Activated T-helper 2 cell treated with anti-CD3 and anti-CD28 coated beads, Interferon-gamma antibody, Interleukin-2, Interleukin-4, amounts not matched to agents 10 μg/mL and 5 μg/mL and 100 μg/mL, durations not matched to agents 14 hours and 24 hours and 36 hours (primary cell): ENCODE measurements at regions of chr12 and their contacts with region 1.

Region 1: GRCh38 chr12:6925540-6926279 is 2.0 kb upstream of the ATN1 start:
- DNase-seq: no peak
- H3K4me3 Mint-ChIP-seq: peak overlapping the region; percentile 83
- H3K27ac Mint-ChIP-seq: peak overlapping the region; percentile 31
- H3K4me1 Mint-ChIP-seq: peaks cover 48% of the 10 kb centered on the region
- H3K27me3 Mint-ChIP-seq: no peaks in the 10 kb centered on the region

Region 2: GRCh38 chr12:6383572-6384498 is 541.9 kb before region 1 on chr12 and contains the start of gene LTBR:
- intact Hi-C with region 1: no loop called
- DNase-seq: no peak
- H3K4me3 Mint-ChIP-seq: no peak within 1 kb of the TSS
- H3K27ac Mint-ChIP-seq: no peak within 1 kb of the TSS
- H3K4me1 Mint-ChIP-seq: no peaks in the 10 kb centered on the region
- H3K27me3 Mint-ChIP-seq: peaks cover 39% of the 10 kb centered on the region
- total RNA-seq, gene LTBR: 0.32 and 0.50 TPM in 2 replicates

Region 3: GRCh38 chr12:6723607-6724396 is 201.9 kb before region 1 on chr12 and contains the start of gene COPS7A:
- intact Hi-C with region 1: no loop called
- DNase-seq: peak; percentile 98
- H3K4me3 Mint-ChIP-seq: peak within 1 kb of the TSS; percentile 99
- H3K27ac Mint-ChIP-seq: peak within 1 kb of the TSS; percentile 98
- H3K4me1 Mint-ChIP-seq: peaks cover 17% of the 10 kb centered on the region
- H3K27me3 Mint-ChIP-seq: no peaks in the 10 kb centered on the region
- total RNA-seq, gene COPS7A: 33.0 and 35.6 TPM in 2 replicates

Region 4: DNA sequence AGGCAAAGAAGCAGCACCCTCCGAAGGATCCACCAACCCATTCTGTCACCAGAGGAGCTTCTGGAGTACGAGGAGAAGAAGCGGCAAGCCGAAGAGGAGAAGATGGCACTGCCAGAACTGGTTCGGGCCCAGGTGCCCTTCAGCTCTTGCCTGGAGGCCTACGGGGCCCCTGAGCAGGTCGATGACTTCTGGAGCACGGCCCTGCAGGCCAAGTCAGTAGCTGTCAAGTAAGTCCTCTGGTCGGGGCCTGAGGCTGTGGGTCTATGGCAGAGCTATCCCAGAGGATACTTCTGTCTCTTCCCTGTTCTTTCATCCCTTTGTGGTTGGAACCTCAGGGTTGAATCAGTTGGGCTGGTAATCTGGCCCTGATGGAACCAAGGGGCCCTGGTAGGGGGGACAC is 64.3 kb before region 1 on chr12:
- intact Hi-C with region 1: no loop called
- DNase-seq: no peak
- H3K4me3 Mint-ChIP-seq: no peak overlapping the region
- H3K27ac Mint-ChIP-seq: no peak overlapping the region
- H3K4me1 Mint-ChIP-seq: peaks cover under 1% of the 10 kb centered on the region
- H3K27me3 Mint-ChIP-seq: no peaks in the 10 kb centered on the region

Region 5: GRCh38 chr12:6937481-6938297 is 12.0 kb after region 1 on chr12:
- intact Hi-C with region 1: loop called (anchors 1 kb)
- DNase-seq: peak; percentile 93
- H3K4me3 Mint-ChIP-seq: peak overlapping the region; percentile 80
- H3K27ac Mint-ChIP-seq: peak overlapping the region; percentile 95
- H3K4me1 Mint-ChIP-seq: peaks cover 45% of the 10 kb centered on the region
- H3K27me3 Mint-ChIP-seq: no peaks in the 10 kb centered on the region

Region 6: GRCh38 chr12:7092229-7092985 is 166.7 kb after region 1 on chr12 and contains the start of gene C1R:
- intact Hi-C with region 1: loop called (anchors 2 kb)
- DNase-seq: peak; percentile 45
- H3K4me3 Mint-ChIP-seq: peak within 1 kb of the TSS; percentile 75
- H3K27ac Mint-ChIP-seq: peak within 1 kb of the TSS; percentile 63
- H3K4me1 Mint-ChIP-seq: peaks cover 6% of the 10 kb centered on the region
- H3K27me3 Mint-ChIP-seq: no peaks in the 10 kb centered on the region
- total RNA-seq, gene C1R: 1.5 and 2.5 TPM in 2 replicates

Region 7: DNA sequence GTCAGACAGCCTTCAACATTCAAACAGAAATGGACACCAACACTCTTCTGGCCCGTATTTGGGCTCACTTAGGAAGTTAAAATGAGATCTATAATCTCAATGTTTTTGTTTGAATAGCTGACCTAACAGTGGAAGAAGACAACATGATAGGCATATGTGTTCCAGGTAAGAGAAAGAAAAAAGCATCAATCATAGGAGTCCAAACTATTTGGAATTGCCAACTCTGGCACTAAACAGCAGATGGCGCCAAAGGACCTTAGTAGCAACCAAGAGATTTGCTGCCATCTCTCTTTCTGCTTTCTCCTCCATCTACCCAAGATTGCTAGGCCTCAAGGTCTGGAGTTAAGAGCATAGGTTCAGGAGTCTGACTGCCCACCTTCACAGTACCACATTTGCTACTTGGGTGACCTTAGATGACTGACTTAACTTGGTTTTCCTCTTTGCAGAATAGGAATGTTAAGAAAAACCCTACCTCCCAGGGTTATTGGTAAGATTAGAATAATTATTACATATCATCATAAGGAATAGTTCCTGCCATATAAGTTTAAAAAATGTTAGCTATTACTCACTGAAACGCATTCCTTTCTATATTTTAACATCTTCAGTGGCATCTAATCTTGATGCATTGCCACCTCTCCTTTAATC is 294.0 kb after region 1 on chr12:
- intact Hi-C with region 1: no loop called
- DNase-seq: peak; percentile 49
- H3K4me3 Mint-ChIP-seq: no peak overlapping the region
- H3K27ac Mint-ChIP-seq: no peak overlapping the region
- H3K4me1 Mint-ChIP-seq: no peaks in the 10 kb centered on the region
- H3K27me3 Mint-ChIP-seq: peaks cover 3% of the 10 kb centered on the region